Motor neuron (in vitro differentiated cells): ENCODE measurements at regions of chr5 and their contacts with region 1.

Region 1: DNA sequence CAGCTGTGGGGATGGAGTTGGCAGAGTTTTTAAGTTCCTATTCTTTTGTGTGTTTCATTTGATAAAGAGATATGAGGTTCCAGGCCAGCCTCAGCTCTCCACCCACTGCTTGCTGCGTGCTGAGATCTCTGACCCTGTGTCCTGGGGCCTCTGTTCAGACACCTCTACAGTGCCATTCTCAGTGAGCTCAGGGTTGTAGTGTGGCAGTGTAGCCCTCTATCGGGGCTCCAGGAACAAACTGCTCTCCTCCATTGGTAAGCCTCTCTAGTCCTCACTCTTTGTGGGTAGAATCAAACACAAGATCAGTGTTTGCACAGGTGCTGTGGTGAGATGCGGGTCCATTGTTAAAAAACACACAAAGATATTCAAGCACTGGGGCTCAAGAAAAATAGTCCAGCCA is 386.6 kb upstream of the RPS23 start:
- ATAC-seq: peak in 1 of 8 experiments; percentile 93
- H3K4me3 ChIP-seq: no peak overlapping the region
- H3K27ac ChIP-seq: no peak overlapping the region
- H3K4me1 ChIP-seq: peaks cover under 1 to 3% of the 10 kb centered on the region in 2 donors

Region 2: GRCh38 chr5:82793808-82794419 is 129.2 kb after region 1 on chr5:
- in situ Hi-C with region 1: loop called in 1 of 9 experiments (anchors 25 kb)
- ATAC-seq: no peak
- H3K4me3 ChIP-seq: no peak overlapping the region
- H3K27ac ChIP-seq: no peak overlapping the region
- H3K4me1 ChIP-seq: no peaks in the 10 kb centered on the region